AG04449 (cell line): ENCODE measurements at regions of chr14 and their contacts with region 1.

Region 1: GRCh38 chr14:100375963-100376735 is 53.0 kb downstream of the SLC25A47 start:
- DNase-seq: peak; percentile 70
- H3K4me3 ChIP-seq: peak within 1 kb of the TSS; percentile 66
- CTCF ChIP-seq: no peak

Region 2: DNA sequence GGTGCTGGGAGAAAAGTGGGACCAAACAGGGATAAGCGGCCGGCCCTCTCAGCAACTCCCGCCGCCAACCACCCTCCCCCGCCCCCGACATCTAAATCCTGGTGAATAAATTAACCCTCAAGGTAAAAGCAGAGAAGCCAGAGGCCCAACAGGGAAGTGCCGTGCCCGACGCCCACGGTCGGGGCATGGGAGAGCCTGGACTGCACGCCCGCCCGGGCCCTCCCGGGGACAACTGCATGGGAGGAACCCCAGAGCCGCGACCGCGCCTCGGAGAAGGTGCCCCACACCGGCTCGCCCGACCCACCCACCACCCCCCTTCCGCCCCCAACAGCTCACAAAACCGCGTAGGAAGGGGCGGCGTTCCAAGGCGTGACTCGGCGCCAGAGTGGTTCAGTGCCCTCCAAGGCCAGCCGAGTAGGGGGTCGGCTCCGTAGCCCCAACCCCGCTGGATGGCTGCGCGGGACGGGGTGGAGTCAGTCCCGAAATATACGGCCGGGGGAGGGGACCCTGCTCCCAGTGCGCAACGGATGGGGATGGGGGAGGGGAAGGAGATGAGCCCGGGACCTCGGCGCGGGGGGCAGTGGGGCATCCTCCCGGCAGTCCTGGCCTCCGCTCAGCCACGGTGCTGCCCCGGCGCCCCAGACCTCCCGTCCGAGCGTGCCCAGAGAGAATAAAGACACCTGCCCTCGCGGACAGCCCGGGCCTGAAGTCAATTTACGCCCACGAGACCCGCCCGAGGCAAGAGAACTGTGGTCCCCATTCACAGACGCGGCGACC is 70.6 kb before region 1 on chr14:
- CTCF ChIA-PET with region 1: interaction called, 10 read pairs
- POLR2A ChIA-PET with region 1: interaction called, 3 read pairs
- DNase-seq: no peak
- H3K4me3 ChIP-seq: peak overlapping the region; percentile 72
- CTCF ChIP-seq: no peak

Region 3: DNA sequence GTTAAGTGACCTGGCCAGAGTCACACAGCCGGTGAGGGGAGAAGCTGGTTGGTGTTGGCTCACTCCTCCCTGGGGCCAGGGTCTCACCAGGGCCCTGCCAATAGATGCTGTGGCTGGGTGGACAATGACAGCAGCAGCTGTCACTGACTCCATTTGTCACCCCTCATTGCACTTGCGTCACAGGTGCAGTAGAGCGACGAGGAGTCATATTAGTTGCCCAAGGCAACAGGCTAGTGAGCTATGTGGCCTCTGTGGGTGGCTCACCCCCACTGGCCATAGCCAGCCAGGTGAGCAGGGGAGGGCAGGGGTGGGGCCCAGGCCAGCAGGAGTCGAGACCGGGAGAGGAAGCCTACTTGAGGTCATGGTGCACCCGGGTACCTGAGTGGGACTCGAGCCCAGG is 43.4 kb before region 1 on chr14:
- CTCF ChIA-PET with region 1: no interaction called
- POLR2A ChIA-PET with region 1: no interaction called
- DNase-seq: no peak
- H3K4me3 ChIP-seq: no peak overlapping the region
- CTCF ChIP-seq: no peak

Region 4: DNA sequence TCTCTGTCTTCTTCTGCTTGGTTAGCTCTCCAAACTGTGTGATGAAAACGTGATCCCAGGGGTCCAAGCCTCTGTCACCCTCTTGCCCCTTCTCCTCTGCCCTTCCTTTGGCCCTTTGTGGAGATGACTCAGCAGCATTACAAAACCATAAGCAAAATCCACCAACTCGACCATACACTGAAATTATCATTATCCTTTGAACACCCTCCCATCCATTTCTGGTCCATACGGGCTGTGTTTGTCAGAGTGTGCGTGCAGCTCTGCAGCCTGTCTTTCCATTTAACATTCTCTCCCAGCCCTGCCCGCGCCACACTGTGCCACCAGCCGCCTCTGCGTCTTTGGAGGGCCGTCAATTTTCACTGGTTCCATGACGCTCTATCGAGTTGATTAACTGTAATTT is 16.2 kb after region 1 on chr14:
- CTCF ChIA-PET with region 1: interaction called, 119 read pairs
- POLR2A ChIA-PET with region 1: no interaction called
- DNase-seq: no peak
- H3K4me3 ChIP-seq: no peak overlapping the region; the same call in 1 of the 2 replicates
- CTCF ChIP-seq: no peak

Region 5: GRCh38 chr14:100504372-100505078 is 128.4 kb after region 1 on chr14:
- CTCF ChIA-PET with region 1: no interaction called
- POLR2A ChIA-PET with region 1: no interaction called
- DNase-seq: no peak
- H3K4me3 ChIP-seq: no peak overlapping the region
- CTCF ChIP-seq: no peak

Region 6: GRCh38 chr14:100662879-100663760 is 287.0 kb after region 1 on chr14:
- CTCF ChIA-PET with region 1: interaction called, 497 read pairs
- POLR2A ChIA-PET with region 1: no interaction called
- DNase-seq: no peak
- H3K4me3 ChIP-seq: no peak overlapping the region
- CTCF ChIP-seq: peak; percentile 84